Calu3 (cell line): ENCODE measurements at regions of chr3 and their contacts with region 1.

Region 1: GRCh38 chr3:50272911-50273693 is 4.2 kb downstream of the SEMA3B start:
- DNase-seq: peak; percentile 94
- H3K4me3 Mint-ChIP-seq: peak overlapping the region; percentile 63
- H3K27ac Mint-ChIP-seq: peak overlapping the region; percentile 32
- H3K4me1 Mint-ChIP-seq: peaks cover 42% of the 10 kb centered on the region
- H3K27me3 Mint-ChIP-seq: no peaks in the 10 kb centered on the region
- CTCF ChIP-seq: peak; percentile 96

Region 2: GRCh38 chr3:50121416-50122032 is 151.6 kb before region 1 on chr3:
- CTCF ChIA-PET with region 1: no interaction called
- intact Hi-C with region 1: loop called (anchors 2 kb)
- DNase-seq: peak; percentile 84
- H3K4me3 Mint-ChIP-seq: no peak overlapping the region
- H3K27ac Mint-ChIP-seq: no peak overlapping the region
- H3K4me1 Mint-ChIP-seq: peaks cover 8% of the 10 kb centered on the region
- H3K27me3 Mint-ChIP-seq: no peaks in the 10 kb centered on the region
- CTCF ChIP-seq: peak; percentile 59

Region 3: GRCh38 chr3:50192689-50193141 is 80.4 kb before region 1 on chr3:
- CTCF ChIA-PET with region 1: interaction called, 6 read pairs
- intact Hi-C with region 1: loop called (anchors 1 kb)
- DNase-seq: peak; percentile 84
- H3K4me3 Mint-ChIP-seq: no peak overlapping the region
- H3K27ac Mint-ChIP-seq: no peak overlapping the region
- H3K4me1 Mint-ChIP-seq: no peaks in the 10 kb centered on the region
- H3K27me3 Mint-ChIP-seq: peaks cover 15% of the 10 kb centered on the region
- CTCF ChIP-seq: peak; percentile 92

Region 4: GRCh38 chr3:50227390-50228183 is 45.5 kb before region 1 on chr3:
- CTCF ChIA-PET with region 1: interaction called, 8 read pairs
- intact Hi-C with region 1: loop called (anchors 1 kb)
- DNase-seq: peak; percentile 97
- H3K4me3 Mint-ChIP-seq: peak overlapping the region; percentile 75
- H3K27ac Mint-ChIP-seq: peak overlapping the region; percentile 60
- H3K4me1 Mint-ChIP-seq: peaks cover 27% of the 10 kb centered on the region
- H3K27me3 Mint-ChIP-seq: peaks cover 26% of the 10 kb centered on the region
- CTCF ChIP-seq: peak; percentile 73

Region 5: GRCh38 chr3:50321336-50322114 is 48.4 kb after region 1 on chr3:
- CTCF ChIA-PET with region 1: no interaction called
- intact Hi-C with region 1: loop called (anchors 10 kb)
- DNase-seq: peak; percentile 91
- H3K4me3 Mint-ChIP-seq: peak overlapping the region; percentile 74
- H3K27ac Mint-ChIP-seq: peak overlapping the region; percentile 94
- H3K4me1 Mint-ChIP-seq: peaks cover 6% of the 10 kb centered on the region
- H3K27me3 Mint-ChIP-seq: no peaks in the 10 kb centered on the region
- CTCF ChIP-seq: peak; percentile 12